ENCODE measurements at regions of chr3 and their contacts with region 1.

Region 1: DNA sequence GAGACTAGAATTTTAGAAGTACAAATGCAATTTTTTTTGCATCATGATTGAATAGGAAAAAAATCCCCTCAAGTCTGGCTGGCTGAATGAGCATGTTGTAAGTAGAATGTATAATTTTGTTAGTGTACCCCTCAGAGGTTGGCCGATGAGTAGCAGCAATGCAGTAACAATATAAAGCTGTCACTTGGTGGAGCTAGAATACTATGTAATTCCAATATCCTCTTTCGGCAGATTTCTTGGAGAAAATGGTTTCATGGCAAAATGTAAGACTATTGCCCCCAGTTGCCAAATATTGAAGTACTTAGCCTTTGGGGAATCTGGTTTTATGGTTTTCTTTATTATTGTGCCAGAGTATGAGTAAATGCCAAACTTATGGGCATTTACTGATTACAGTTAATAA is 39.8 kb upstream of the SGO1 start:
- DNase-seq: no peak
- ATAC-seq: peak in 3 of 8 donors; percentile 42 to 55 (median 44)
- H3K4me3 ChIP-seq: no peak overlapping the region
- H3K27ac ChIP-seq: no peak overlapping the region
- H3K4me1 ChIP-seq: peaks cover 0 to 6% (median 0%) of the 10 kb centered on the region in 9 donors
- H3K27me3 ChIP-seq: no peaks in the 10 kb centered on the region
- CTCF ChIP-seq: peak; percentile 11 to 74 (median 64)

Region 2: GRCh38 chr3:21484057-21484827 is 1258.5 kb after region 1 on chr3:
- intact Hi-C with region 1: loop called in 1 of 10 experiments (anchors 10 kb)
- DNase-seq: peak; percentile 11 to 64
- ATAC-seq: peak in 7 of 8 donors; percentile 46 to 80 (median 67)
- H3K4me3 ChIP-seq: no peak overlapping the region
- H3K27ac ChIP-seq: no peak overlapping the region
- H3K4me1 ChIP-seq: peaks cover 0 to 1% (median 0%) of the 10 kb centered on the region in 9 donors
- H3K27me3 ChIP-seq: no peaks in the 10 kb centered on the region
- CTCF ChIP-seq: peak; percentile 36 to 74 (median 63)

Region 3: DNA sequence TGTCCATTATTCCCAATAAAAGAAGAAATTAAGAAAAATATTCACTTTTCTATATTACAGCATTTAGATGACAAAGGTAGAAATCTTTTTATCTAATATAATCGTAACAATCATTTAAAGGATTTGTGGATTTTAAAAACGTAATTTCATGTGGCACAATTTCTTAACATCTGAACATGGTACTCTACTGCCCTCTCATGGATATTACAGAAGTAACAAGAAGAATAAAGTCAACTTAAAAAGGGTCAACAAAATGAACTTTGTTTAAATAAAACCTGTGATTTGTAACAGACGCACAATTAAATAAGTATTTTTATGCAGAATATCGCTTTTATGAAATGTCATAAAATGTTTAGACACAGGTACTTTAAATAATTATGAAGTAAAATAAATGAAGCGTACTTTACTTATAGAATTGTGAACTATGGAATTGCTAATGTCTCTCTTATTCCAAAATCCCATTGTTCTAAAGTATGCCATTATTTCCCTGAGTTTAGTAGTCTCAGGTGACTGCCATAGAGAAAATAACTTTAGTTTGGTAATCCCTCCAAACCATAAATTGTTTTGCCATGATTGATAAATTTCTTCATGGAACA is 1892.1 kb after region 1 on chr3:
- intact Hi-C with region 1: loop called in 3 of 10 experiments (anchors 5 to 10 kb)
- DNase-seq: no peak
- ATAC-seq: no peak
- H3K4me3 ChIP-seq: no peak overlapping the region
- H3K27ac ChIP-seq: no peak overlapping the region
- H3K4me1 ChIP-seq: no peaks in the 10 kb centered on the region
- H3K27me3 ChIP-seq: no peaks in the 10 kb centered on the region
- CTCF ChIP-seq: peak; percentile 34 to 80 (median 66)